Activated CD4-positive, alpha-beta T cell treated with anti-CD3 and anti-CD28 coated beads, Interleukin-2, amount 10 ng/mL, durations not matched to agents 7 days and 5 days (primary cell): ENCODE measurements at regions of chr3 and their contacts with region 1.

Region 1: DNA sequence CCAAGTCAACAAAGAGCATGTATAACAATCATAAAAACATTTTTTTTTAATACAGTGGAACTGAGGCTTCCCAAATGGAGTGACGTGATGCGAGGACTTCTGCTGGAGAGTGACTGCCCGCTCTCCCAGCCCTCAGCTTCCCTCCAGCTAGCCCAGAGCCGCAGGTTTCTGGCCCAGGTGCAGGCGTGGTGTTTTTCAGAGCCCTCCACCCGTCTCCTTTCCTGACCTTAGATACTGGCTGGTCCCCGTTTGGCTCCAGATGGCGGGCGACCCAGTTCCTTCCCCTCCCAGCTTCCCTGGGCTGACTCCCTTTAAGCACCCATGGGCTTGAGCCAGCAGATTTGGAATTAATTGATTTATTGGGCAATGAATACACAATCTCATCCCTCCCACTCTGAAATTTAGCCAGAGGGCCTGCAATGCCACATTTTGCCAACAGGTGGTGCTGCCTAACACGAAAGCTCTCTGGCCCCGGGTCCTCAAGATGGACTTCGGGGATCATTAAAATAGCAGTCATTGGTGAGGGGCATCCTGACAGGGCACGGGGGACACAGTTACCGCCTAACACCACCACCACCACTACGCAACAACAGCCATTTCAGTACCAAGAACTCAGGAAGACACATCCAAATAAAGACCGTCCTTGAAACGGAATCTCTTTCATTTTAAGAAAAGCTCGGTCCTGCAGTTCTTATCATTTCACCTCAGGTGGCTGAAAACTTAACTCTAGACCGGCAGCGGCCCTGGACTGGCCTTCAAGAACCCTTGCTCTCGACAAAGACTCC is 47.5 kb upstream of the MUC4 start:
- DNase-seq: peak; percentile 77
- H3K4me3 Mint-ChIP-seq: no peak overlapping the region
- H3K27ac Mint-ChIP-seq: no peak overlapping the region
- H3K4me1 Mint-ChIP-seq: peaks cover 5% of the 10 kb centered on the region
- H3K27me3 Mint-ChIP-seq: no peaks in the 10 kb centered on the region

Region 2: GRCh38 chr3:195894780-195895607 is 35.7 kb after region 1 on chr3:
- CTCF ChIA-PET with region 1: interaction called, 11 read pairs
- POLR2A ChIA-PET with region 1: interaction called, 3 read pairs
- DNase-seq: peak; percentile 71
- H3K4me3 Mint-ChIP-seq: peak overlapping the region; percentile 87
- H3K27ac Mint-ChIP-seq: peak overlapping the region; percentile 87
- H3K4me1 Mint-ChIP-seq: peaks cover 44% of the 10 kb centered on the region
- H3K27me3 Mint-ChIP-seq: no peaks in the 10 kb centered on the region